HCT116 (cell line): ENCODE measurements at regions of chr11 and their contacts with region 1.

Region 1: GRCh38 chr11:75142714-75143419 is 8.0 kb upstream of the SLCO2B1 start:
- DNase-seq: peak; percentile 84
- ATAC-seq: peak; percentile 86
- H3K4me3 ChIP-seq: peak overlapping the region in 1 of 2 experiments; percentile 16; a peak in 1 of 4 replicates
- H3K27ac ChIP-seq: peak overlapping the region; percentile 53
- H3K4me1 ChIP-seq: peaks cover 10 to 28% of the 10 kb centered on the region in 2 experiments
- H3K27me3 ChIP-seq: no peaks in the 10 kb centered on the region
- CTCF ChIP-seq: no peak
- POLR2A ChIP-seq: peak; percentile 46
- RAD21 ChIP-seq: no peak

Region 2: DNA sequence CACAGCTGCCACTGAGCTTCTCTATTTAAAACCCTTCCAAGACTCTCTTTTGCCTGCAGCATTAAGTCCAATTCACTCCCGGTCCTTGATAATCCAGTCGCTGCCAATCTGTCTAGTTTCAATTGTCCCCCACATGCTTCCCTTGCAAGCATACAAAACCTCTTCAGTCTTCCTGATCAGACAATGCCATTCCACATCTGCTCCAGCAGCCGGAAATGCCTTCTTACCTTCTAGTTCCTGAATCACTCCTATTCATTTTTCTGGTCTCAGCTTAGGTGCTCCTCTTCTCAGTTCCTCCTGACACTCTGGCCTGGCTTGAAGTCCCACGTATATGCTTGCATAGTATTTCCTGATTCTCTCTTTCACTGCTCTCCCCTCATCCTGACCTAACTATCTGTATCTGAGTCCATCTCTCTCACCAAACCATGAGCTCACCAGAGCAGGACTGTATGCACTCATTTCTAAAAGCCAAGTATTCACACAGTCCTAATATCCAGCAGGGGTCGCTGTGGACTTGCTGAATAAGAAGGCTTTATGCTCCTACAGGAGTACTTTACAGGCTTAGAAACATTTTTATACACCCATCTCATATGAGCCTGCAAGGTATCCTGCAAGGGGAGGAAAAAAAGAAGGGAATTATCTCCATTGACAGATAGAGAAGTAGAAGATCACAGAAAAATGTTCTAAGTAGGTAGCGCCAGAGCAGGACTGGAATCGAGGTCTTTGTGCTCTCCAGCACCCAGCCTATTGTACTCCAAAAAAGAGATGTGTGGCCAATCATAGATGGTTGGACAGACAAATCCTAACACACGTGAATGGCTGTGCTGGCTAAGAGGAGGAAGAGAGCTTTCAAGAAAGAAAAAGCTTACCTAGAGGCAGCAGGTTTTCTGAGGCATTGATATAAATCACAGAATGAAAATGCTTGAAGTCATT is 213.2 kb before region 1 on chr11:
- CTCF ChIA-PET with region 1: interaction called, 8 read pairs
- POLR2A ChIA-PET with region 1: no interaction called
- RAD21 ChIA-PET with region 1: interaction called in 1 of 2 experiments, 4 read pairs
- intact Hi-C with region 1: loop called (anchors 1 kb)
- DNase-seq: peak; percentile 81
- ATAC-seq: peak; percentile 99
- H3K4me3 ChIP-seq: no peak overlapping the region
- H3K27ac ChIP-seq: no peak overlapping the region
- H3K4me1 ChIP-seq: no peaks in the 10 kb centered on the region
- H3K27me3 ChIP-seq: no peaks in the 10 kb centered on the region
- CTCF ChIP-seq: peak; percentile 85 to 99 (median 88)
- POLR2A ChIP-seq: no peak
- RAD21 ChIP-seq: peak; percentile 84

Region 3: DNA sequence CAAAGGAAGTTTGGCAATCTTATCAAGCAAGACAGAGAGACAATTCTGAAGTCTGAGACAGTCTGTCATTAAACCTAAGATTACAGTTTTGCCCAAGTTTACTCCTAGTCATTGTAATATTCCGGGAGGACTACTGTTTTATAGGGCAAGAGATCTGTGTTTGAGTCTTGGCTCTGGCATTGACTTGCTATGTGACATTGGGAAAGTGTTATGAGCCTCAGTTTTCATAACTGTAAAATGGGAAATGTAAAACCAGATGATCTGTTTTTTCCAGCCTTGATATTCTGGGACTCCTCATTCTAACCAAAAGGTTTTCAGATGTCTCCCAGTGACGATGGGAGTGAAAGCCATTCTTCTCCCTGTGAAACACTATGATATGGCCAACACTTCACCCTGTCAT is 16.3 kb before region 1 on chr11:
- CTCF ChIA-PET with region 1: interaction called, 15 read pairs
- POLR2A ChIA-PET with region 1: no interaction called
- RAD21 ChIA-PET with region 1: no interaction called
- intact Hi-C with region 1: no loop called
- DNase-seq: no peak
- ATAC-seq: no peak
- H3K4me3 ChIP-seq: no peak overlapping the region
- H3K27ac ChIP-seq: no peak overlapping the region
- H3K4me1 ChIP-seq: no peaks in the 10 kb centered on the region
- H3K27me3 ChIP-seq: no peaks in the 10 kb centered on the region
- CTCF ChIP-seq: no peak
- POLR2A ChIP-seq: no peak
- RAD21 ChIP-seq: no peak

Region 4: GRCh38 chr11:75154646-75155581 is 12.0 kb after region 1 on chr11:
- CTCF ChIA-PET with region 1: interaction called, 10 read pairs
- POLR2A ChIA-PET with region 1: interaction called, 3 read pairs
- RAD21 ChIA-PET with region 1: no interaction called
- intact Hi-C with region 1: no loop called
- DNase-seq: no peak
- ATAC-seq: no peak
- H3K4me3 ChIP-seq: no peak overlapping the region
- H3K27ac ChIP-seq: no peak overlapping the region
- H3K4me1 ChIP-seq: peaks cover 0 to 10% of the 10 kb centered on the region in 2 experiments; a peak in 2 of 4 replicates
- H3K27me3 ChIP-seq: peaks cover 4% of the 10 kb centered on the region; the same call in 1 of the 2 replicates
- CTCF ChIP-seq: no peak
- POLR2A ChIP-seq: no peak
- RAD21 ChIP-seq: no peak

Region 5: DNA sequence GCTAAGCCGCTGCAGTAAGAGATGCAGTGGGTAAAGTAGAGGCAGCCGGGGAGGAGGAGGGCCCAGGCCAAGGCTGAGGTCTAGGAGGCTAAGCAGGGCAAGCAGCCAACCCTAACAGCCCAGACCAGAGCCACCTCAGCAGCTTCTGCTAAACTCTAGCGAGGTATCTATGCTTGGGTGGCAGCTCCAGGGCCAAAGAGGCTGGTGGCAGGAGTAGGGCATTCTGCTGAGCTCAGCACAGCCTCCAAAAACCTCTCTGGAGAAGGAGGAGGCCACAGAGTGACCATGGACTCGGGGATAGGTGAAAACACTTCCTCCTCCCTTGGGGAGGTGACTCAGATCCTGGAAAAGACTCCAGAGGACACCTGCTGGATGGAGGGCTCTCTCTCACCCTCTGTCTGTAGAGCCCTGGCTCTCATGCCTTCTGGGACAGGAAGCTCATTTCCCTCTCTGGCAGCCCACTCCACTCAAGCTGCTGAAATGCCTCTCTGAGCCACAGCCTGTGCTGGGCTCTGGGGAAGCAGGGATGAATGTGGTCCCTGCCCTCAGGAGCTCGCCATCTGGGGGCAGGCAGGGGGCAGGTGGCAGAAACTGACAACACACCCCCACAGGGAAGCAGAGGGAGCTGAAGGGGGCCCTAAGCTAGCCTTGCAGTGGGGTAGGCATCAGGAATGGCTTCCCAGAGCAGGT is 81.2 kb after region 1 on chr11:
- CTCF ChIA-PET with region 1: interaction called, 10 read pairs
- POLR2A ChIA-PET with region 1: no interaction called
- RAD21 ChIA-PET with region 1: no interaction called
- intact Hi-C with region 1: no loop called
- DNase-seq: no peak
- ATAC-seq: peak; percentile 95
- H3K4me3 ChIP-seq: no peak overlapping the region
- H3K27ac ChIP-seq: no peak overlapping the region
- H3K4me1 ChIP-seq: peaks cover 0 to 7% of the 10 kb centered on the region in 2 experiments; a peak in 2 of 4 replicates
- H3K27me3 ChIP-seq: peaks cover 13% of the 10 kb centered on the region; the same call in 1 of the 2 replicates
- CTCF ChIP-seq: peak in 2 of 3 experiments; percentile 25 to 37; a peak in 3 of 6 replicates
- POLR2A ChIP-seq: no peak
- RAD21 ChIP-seq: peak; percentile 30

Region 6: GRCh38 chr11:75248690-75249268 is 105.9 kb after region 1 on chr11:
- CTCF ChIA-PET with region 1: interaction called, 160 read pairs
- POLR2A ChIA-PET with region 1: interaction called, 5 read pairs
- RAD21 ChIA-PET with region 1: interaction called, 9 read pairs
- intact Hi-C with region 1: loop called (anchors 1 kb)
- DNase-seq: peak; percentile 89
- ATAC-seq: peak; percentile 95
- H3K4me3 ChIP-seq: no peak overlapping the region
- H3K27ac ChIP-seq: no peak overlapping the region
- H3K4me1 ChIP-seq: peaks cover 0 to 2% of the 10 kb centered on the region in 2 experiments; a peak in 1 of 4 replicates
- H3K27me3 ChIP-seq: no peaks in the 10 kb centered on the region
- CTCF ChIP-seq: peak; percentile 99 to 100 (median 100)
- POLR2A ChIP-seq: no peak
- RAD21 ChIP-seq: peak; percentile 100

Region 7: GRCh38 chr11:75760710-75761493 is 618.0 kb after region 1 on chr11:
- CTCF ChIA-PET with region 1: no interaction called
- POLR2A ChIA-PET with region 1: no interaction called
- RAD21 ChIA-PET with region 1: no interaction called
- intact Hi-C with region 1: no loop called
- DNase-seq: no peak
- ATAC-seq: no peak
- H3K4me3 ChIP-seq: no peak overlapping the region
- H3K27ac ChIP-seq: no peak overlapping the region
- H3K4me1 ChIP-seq: no peaks in the 10 kb centered on the region
- H3K27me3 ChIP-seq: no peaks in the 10 kb centered on the region
- CTCF ChIP-seq: no peak
- POLR2A ChIP-seq: no peak
- RAD21 ChIP-seq: no peak